A549 (cell line): ENCODE measurements at regions of chr11 and their contacts with region 1.

Region 1: DNA sequence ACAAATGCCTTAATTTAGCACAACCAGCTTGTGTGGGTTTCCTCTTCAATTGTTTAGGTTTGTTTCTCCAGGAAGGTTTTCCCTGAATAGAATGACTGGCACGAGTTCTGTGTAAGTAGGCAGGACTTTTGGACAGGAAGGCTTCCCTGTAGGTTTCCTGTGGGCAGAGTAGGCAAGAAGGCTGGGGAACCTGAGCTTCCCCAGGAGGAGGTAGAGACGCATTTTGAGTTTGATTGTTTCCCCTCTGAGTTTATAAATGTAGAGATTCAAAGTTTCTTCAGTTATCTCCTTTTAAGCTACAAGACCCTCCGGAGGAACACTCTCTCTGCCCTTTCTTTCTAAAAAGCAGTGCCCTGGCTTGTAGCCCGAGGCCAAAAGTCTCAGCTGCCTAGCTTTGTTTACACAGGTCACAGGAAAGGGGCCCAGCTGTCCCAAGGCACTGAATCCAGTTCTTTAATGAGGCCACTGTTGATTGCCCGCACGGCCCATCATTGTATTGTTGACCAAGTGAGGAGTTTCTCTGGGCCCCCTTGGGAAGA is 66.6 kb upstream of the RDX start:
- DNase-seq: peak in 1 of 2 experiments; percentile 70
- ATAC-seq: peak; percentile 79 to 87; a peak in 5 of 6 replicates
- H3K4me3 ChIP-seq: no peak overlapping the region; the same call in 2 of the 3 replicates
- H3K27ac ChIP-seq: peak overlapping the region; percentile 82 to 92
- H3K4me1 ChIP-seq: peaks cover 71% of the 10 kb centered on the region
- CTCF ChIP-seq: no peak
- EP300 ChIP-seq: no peak
- POLR2A ChIP-seq: no peak
- RAD21 ChIP-seq: no peak

Region 2: DNA sequence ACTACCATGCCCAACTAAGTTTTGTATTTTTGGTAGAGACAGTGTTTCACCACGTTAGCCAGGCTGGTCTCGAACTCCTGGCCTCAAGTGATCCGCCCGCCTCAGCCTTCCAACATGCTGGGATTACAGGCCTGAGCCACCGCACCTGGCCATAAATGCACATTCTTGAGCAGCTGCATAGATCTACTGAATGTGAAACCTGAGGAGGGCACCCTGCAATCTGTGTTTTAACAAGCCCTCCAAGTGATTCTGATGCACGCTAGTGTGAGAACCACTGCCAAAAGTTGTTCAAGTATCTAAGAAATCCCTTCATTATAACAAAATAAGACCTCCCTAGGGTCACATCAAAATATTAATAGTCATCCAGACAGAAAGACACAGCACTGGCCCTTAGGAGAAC is 155.9 kb before region 1 on chr11:
- CTCF ChIA-PET with region 1: interaction called, 35 read pairs
- POLR2A ChIA-PET with region 1: no interaction called
- DNase-seq: no peak
- ATAC-seq: no peak
- H3K4me3 ChIP-seq: no peak overlapping the region
- H3K27ac ChIP-seq: peak overlapping the region in 1 of 2 experiments; percentile 85; a peak in 4 of 6 replicates
- H3K4me1 ChIP-seq: peaks cover 16% of the 10 kb centered on the region; the same call in 2 of the 3 replicates
- CTCF ChIP-seq: no peak
- EP300 ChIP-seq: no peak
- POLR2A ChIP-seq: no peak
- RAD21 ChIP-seq: no peak

Region 3: DNA sequence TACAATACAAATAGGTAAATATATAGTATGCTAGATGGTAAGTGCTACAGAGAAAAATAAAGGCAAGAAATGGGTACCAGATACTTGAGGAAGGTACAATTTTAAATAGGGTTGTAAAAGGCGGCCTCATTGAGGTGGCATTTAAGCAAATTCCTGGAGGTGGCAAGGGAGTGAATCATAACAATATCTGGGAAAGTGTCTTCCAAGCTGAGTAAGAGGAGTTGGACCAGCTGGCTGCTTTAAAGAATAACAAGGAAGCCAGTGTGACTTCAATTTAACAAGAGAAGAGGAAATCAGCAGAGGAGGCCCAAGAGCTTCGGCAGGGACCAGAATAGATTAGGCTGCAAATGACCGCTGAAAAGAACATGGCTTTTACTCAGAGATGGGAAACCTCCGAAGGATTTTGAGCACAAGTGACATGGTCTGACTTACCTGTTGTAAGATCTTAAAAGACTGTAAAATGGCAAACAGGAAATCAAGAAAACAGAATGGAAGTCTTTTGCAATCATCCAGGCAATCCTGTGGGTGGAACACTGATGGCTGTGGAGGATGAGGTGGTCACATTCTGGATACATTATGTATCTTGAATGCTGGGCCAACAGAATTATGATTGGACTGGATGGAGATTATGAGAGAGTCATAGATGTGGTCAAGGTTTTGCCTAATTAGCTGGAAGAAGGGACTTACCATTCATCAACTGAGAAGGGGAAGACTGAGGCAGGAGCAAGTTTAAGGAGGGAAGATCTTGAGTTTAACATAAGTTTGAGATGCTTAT is 143.8 kb before region 1 on chr11:
- CTCF ChIA-PET with region 1: no interaction called
- POLR2A ChIA-PET with region 1: no interaction called
- DNase-seq: no peak
- ATAC-seq: no peak
- H3K4me3 ChIP-seq: no peak overlapping the region
- H3K27ac ChIP-seq: no peak overlapping the region
- H3K4me1 ChIP-seq: no peaks in the 10 kb centered on the region
- CTCF ChIP-seq: no peak
- EP300 ChIP-seq: no peak
- POLR2A ChIP-seq: no peak
- RAD21 ChIP-seq: no peak